Activated CD4-positive, alpha-beta T cell treated with anti-CD3 and anti-CD28 coated beads, Interleukin-2, amount 10 ng/mL, durations not matched to agents 24 days and 14 days (primary cell): ENCODE measurements at regions of chr15 and their contacts with region 1.

Region 1: DNA sequence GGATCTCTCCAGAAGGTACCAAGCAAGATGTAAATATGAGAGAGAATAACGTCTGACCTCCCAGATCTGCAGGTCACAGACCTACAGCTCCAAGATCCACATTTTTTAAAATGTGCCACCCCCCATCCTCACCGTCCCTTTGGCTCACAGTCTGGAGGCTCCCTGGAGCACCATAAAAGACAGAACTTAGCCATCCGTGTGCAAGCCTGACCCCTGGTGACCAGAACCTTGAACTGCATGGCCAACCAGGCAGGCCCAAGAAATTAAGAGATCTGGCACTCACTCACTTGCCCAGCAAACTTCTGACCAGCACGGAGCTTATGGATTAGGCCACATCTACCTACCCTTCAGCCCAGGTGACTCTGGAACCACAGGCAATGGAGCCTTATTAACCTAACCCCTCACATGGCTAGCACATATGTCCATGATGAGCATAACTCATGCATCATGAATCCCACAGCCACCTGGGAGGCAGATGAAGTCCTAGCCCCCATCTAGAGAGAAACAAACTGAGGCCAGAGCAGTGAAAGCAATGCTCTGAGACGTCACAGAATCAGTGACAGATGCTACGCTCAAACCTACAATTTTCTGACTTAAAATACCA is 275.3 kb downstream of the UACA start:
- DNase-seq: peak; percentile 93
- H3K4me3 Mint-ChIP-seq: no peak overlapping the region
- H3K27ac Mint-ChIP-seq: peak overlapping the region; percentile 80
- H3K4me1 Mint-ChIP-seq: peaks cover 80% of the 10 kb centered on the region
- H3K27me3 Mint-ChIP-seq: peaks cover 36% of the 10 kb centered on the region

Region 2: GRCh38 chr15:69475769-69476358 is 1012.2 kb before region 1 on chr15:
- intact Hi-C with region 1: loop called (anchors 5 kb)
- DNase-seq: peak; percentile 92
- H3K4me3 Mint-ChIP-seq: no peak overlapping the region
- H3K27ac Mint-ChIP-seq: no peak overlapping the region
- H3K4me1 Mint-ChIP-seq: peaks cover under 1% of the 10 kb centered on the region
- H3K27me3 Mint-ChIP-seq: peaks cover 26% of the 10 kb centered on the region

Region 3: GRCh38 chr15:69713726-69714559 is 774.2 kb before region 1 on chr15:
- intact Hi-C with region 1: loop called (anchors 5 kb)
- DNase-seq: peak; percentile 94
- H3K4me3 Mint-ChIP-seq: peak overlapping the region; percentile 61
- H3K27ac Mint-ChIP-seq: peak overlapping the region; percentile 84
- H3K4me1 Mint-ChIP-seq: peaks cover 52% of the 10 kb centered on the region
- H3K27me3 Mint-ChIP-seq: peaks cover 16% of the 10 kb centered on the region

Region 4: GRCh38 chr15:70097337-70098169 is 390.6 kb before region 1 on chr15 and contains the start of gene TLE3:
- intact Hi-C with region 1: loop called (anchors 1 kb)
- DNase-seq: peak; percentile 99
- H3K4me3 Mint-ChIP-seq: peak within 1 kb of the TSS; percentile 100
- H3K27ac Mint-ChIP-seq: peak within 1 kb of the TSS; percentile 99
- H3K4me1 Mint-ChIP-seq: peaks cover 43% of the 10 kb centered on the region
- H3K27me3 Mint-ChIP-seq: peaks cover 16% of the 10 kb centered on the region
- total RNA-seq, gene TLE3: 111 and 118 TPM in 2 replicates

Region 5: GRCh38 chr15:70299931-70300869 is 187.9 kb before region 1 on chr15:
- intact Hi-C with region 1: loop called (anchors 1 kb)
- DNase-seq: peak; percentile 89
- H3K4me3 Mint-ChIP-seq: no peak overlapping the region
- H3K27ac Mint-ChIP-seq: peak overlapping the region; percentile 41
- H3K4me1 Mint-ChIP-seq: peaks cover 9% of the 10 kb centered on the region
- H3K27me3 Mint-ChIP-seq: peaks cover 22% of the 10 kb centered on the region

Region 6: GRCh38 chr15:70362886-70363285 is 125.2 kb before region 1 on chr15:
- intact Hi-C with region 1: no loop called
- DNase-seq: no peak
- H3K4me3 Mint-ChIP-seq: no peak overlapping the region
- H3K27ac Mint-ChIP-seq: no peak overlapping the region
- H3K4me1 Mint-ChIP-seq: no peaks in the 10 kb centered on the region
- H3K27me3 Mint-ChIP-seq: peaks cover 35% of the 10 kb centered on the region

Region 7: DNA sequence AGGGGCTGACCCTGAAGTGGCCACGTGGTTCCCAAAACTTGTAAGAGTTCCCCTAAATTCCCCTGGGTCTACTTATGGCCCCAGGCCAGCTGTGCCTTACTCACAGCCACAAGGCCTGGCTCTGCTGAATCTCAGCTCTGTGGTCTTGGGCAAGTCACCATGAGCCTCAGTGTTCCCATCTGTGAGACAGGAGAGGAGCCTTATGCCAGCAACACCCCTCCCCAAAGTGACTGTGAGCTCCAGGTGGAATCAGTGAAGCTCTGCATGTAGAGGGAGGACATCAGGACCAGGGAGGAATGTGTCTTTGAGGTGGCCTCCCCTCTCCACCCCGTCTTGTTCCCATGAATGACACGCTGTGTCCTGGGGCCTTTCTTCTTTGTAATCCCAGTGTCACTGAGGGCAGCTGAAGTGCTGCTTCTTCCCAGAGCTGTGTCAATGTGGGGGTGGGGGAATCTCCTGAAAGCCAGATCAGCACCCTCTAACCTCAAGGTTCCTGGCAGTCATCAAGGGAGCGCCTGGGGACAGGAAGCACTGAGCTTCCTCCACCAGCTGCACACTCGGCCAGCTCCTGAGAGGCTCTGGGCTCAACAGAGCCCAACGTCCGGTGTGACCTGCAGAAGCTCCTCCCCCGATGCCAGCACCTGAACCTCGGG is 16.3 kb after region 1 on chr15:
- intact Hi-C with region 1: loop called (anchors 1 kb)
- DNase-seq: peak; percentile 80
- H3K4me3 Mint-ChIP-seq: peak overlapping the region; percentile 71
- H3K27ac Mint-ChIP-seq: peak overlapping the region; percentile 78
- H3K4me1 Mint-ChIP-seq: peaks cover 73% of the 10 kb centered on the region
- H3K27me3 Mint-ChIP-seq: peaks cover 3% of the 10 kb centered on the region

Region 8: DNA sequence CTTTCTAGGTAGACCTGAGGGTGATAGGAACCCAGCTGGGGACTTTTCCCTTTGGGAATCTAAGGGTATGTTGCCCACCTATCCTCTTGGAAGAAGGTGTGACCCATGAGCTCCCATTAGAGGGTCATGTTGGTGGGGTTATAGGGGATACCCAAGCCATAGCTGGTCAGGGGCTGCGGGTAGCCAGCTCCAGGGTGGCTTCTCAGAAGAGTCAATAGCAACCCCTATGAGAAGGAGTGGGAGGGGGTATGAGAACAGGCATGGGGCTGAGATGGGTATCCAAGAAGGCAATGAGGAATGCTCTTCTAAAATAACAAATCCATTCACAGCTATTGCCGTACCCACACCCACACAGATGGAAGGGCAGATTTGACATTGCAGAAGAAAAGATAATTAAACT is 57.4 kb after region 1 on chr15:
- intact Hi-C with region 1: loop called (anchors 5 kb)
- DNase-seq: no peak
- H3K4me3 Mint-ChIP-seq: no peak overlapping the region
- H3K27ac Mint-ChIP-seq: no peak overlapping the region
- H3K4me1 Mint-ChIP-seq: peaks cover 14% of the 10 kb centered on the region
- H3K27me3 Mint-ChIP-seq: peaks cover 14% of the 10 kb centered on the region